Calu3 (cell line): ENCODE measurements at regions of chr18 and their contacts with region 1.

Region 1: DNA sequence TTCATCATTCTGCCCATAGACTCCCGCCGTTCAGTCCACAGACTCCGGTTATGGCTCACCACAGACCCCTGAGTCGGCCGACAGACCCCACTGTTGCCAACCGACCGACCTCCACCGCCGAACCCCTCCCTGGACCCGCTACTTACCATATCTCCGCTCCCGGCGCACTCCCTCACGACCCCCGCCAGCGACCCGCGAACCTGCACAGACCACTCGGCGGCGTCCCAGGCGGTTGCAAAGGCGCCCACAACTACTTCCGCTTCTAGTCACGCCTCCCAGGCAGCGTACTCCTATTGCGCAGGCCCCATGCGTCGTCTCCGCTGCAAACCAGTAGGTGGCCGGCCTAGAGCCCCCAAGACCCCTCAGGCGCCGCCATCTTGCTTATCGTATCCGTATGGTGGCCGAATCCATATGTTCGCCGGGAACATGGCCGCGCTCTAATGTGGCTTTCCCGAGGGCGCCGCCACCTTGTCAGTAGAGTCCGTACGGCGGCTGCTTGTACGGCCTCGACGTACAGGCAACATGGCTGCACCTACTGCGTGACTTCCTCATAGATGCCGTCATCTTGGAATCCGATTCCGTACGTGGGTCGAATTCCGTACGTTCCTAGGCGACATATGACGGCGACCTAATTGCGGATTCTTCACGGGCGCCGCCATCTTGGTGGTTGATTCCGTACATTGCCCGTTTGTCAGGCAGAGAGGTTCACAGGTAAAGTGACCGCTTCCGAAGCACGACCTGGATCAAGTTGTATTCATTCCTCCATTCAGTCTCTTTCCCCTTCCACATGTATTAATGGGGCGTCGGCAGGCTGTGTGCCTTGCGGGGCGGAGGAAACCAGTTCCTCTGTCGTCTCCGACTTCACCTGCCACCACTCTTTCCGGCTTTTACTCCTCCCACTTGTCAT is at the start of gene CXXC1:
- DNase-seq: peak; percentile 96
- H3K4me3 Mint-ChIP-seq: peak within 1 kb of the TSS; percentile 89
- H3K27ac Mint-ChIP-seq: peak within 1 kb of the TSS; percentile 80
- H3K4me1 Mint-ChIP-seq: peaks cover 28% of the 10 kb centered on the region
- H3K27me3 Mint-ChIP-seq: no peaks in the 10 kb centered on the region
- CTCF ChIP-seq: peak; percentile 63
- total RNA-seq, gene CXXC1: 75.1 and 95.2 TPM in 2 replicates

Region 2: GRCh38 chr18:49335677-49336076 is 952.0 kb before region 1 on chr18:
- CTCF ChIA-PET with region 1: no interaction called
- intact Hi-C with region 1: no loop called
- DNase-seq: peak; percentile 50
- H3K4me3 Mint-ChIP-seq: no peak overlapping the region
- H3K27ac Mint-ChIP-seq: no peak overlapping the region
- H3K4me1 Mint-ChIP-seq: peaks cover 14% of the 10 kb centered on the region
- H3K27me3 Mint-ChIP-seq: no peaks in the 10 kb centered on the region
- CTCF ChIP-seq: peak; percentile 37

Region 3: GRCh38 chr18:50307738-50308470 is 20.2 kb after region 1 on chr18:
- CTCF ChIA-PET with region 1: no interaction called
- intact Hi-C with region 1: loop called (anchors 1 kb)
- DNase-seq: peak; percentile 88
- H3K4me3 Mint-ChIP-seq: peak overlapping the region; percentile 81
- H3K27ac Mint-ChIP-seq: peak overlapping the region; percentile 64
- H3K4me1 Mint-ChIP-seq: peaks cover 35% of the 10 kb centered on the region
- H3K27me3 Mint-ChIP-seq: no peaks in the 10 kb centered on the region
- CTCF ChIP-seq: no peak